H1 (cell line): ENCODE measurements at regions of chr12 and their contacts with region 1.

Region 1: GRCh38 chr12:6613776-6614512 is 6.8 kb upstream of the CHD4 start:
- DNase-seq: peak; percentile 82 to 86
- H3K4me3 ChIP-seq: peak overlapping the region in 2 of 4 experiments; percentile 0 to 32; a peak in 1 of 8 replicates
- H3K27ac ChIP-seq: peak overlapping the region; percentile 44; the same call in 1 of the 2 replicates
- H3K4me1 ChIP-seq: peaks cover 15 to 21% (median 17%) of the 10 kb centered on the region in 4 experiments
- H3K27me3 ChIP-seq: peaks cover 0 to 3% (median 1%) of the 10 kb centered on the region in 4 experiments; a peak in 2 of 7 replicates
- CTCF ChIP-seq: peak; percentile 27 to 63 (median 34); a peak in 3 of 4 replicates
- EP300 ChIP-seq: no peak
- POLR2A ChIP-seq: no peak
- RAD21 ChIP-seq: peak in 1 of 2 experiments; percentile 10; a peak in 1 of 4 replicates

Region 2: DNA sequence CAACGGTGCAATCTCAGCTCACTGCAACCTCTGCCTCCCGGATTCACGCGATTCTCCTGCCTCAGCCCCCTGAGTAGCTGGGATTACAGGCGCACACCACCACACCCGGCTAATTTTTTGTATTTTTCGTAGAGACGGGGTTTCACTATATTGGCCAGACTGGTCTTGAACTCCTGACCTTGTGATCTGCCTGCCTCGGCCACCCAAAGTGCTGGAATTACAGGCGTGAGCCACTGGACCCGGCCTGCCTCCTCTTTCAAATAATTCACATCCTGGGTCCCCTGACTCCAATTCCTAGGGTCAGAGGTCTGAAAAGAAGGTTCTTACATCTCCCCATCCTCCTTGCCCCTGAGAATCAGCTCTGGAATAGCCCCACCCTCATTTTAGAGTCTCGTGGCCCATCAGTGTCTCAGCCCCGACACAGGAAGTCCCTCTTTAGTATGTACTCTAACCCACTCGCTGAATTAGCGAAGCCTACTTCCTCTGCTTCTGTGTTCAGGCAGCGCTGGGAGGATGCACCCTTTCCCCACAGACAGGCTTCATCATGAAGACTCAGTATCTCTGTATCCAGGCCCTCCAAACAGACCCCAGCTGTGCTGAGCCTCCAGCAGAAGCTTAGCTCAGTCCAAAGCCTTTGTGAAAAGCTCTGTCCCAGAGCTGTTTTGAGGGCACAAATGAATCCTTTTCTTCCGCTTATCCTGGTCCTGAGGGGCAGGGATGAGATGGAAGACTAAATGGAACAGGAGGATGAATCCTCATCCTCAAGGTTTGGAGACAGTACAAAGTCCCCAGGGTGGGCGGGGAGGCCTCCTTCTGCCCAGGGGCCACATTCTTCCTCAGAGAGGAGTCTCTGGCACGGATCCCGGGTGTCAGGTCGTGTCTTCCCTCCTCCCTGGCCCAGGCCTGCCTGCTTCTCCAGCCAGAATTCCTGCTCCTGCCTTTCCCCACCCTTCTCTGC is 18.4 kb after region 1 on chr12:
- CTCF ChIA-PET with region 1: interaction called, 65 read pairs
- POLR2A ChIA-PET with region 1: interaction called, 3 read pairs
- DNase-seq: no peak
- H3K4me3 ChIP-seq: no peak overlapping the region
- H3K27ac ChIP-seq: no peak overlapping the region
- H3K4me1 ChIP-seq: peaks cover 0 to 11% (median 2%) of the 10 kb centered on the region in 4 experiments; a peak in 5 of 7 replicates
- H3K27me3 ChIP-seq: no peaks in the 10 kb centered on the region
- CTCF ChIP-seq: no peak
- EP300 ChIP-seq: no peak
- POLR2A ChIP-seq: no peak
- RAD21 ChIP-seq: no peak